Vagina (tissue), 2 donors: ENCODE measurements at regions of chrX and their contacts with region 1.

Region 1: GRCh38 chrX:6568031-6568430 is 33.1 kb upstream of the VCX3A start:
- DNase-seq: no peak
- H3K4me3 ChIP-seq: no peak overlapping the region
- H3K27ac ChIP-seq: no peak overlapping the region
- H3K4me1 ChIP-seq: no peaks in the 10 kb centered on the region
- H3K27me3 ChIP-seq: no peaks in the 10 kb centered on the region
- CTCF ChIP-seq: no peak
- POLR2A ChIP-seq: no peak

Region 2: GRCh38 chrX:6614506-6614905 is 46.5 kb after region 1 on chrX:
- intact Hi-C with region 1: no loop called
- DNase-seq: no peak
- H3K4me3 ChIP-seq: no peak overlapping the region
- H3K27ac ChIP-seq: no peak overlapping the region
- H3K4me1 ChIP-seq: no peaks in the 10 kb centered on the region
- H3K27me3 ChIP-seq: no peaks in the 10 kb centered on the region
- CTCF ChIP-seq: no peak
- POLR2A ChIP-seq: no peak

Region 3: GRCh38 chrX:8090482-8090881 is 1522.5 kb after region 1 on chrX:
- intact Hi-C with region 1: loop called (anchors 5 kb)
- DNase-seq: no peak
- H3K4me3 ChIP-seq: no peak overlapping the region
- H3K27ac ChIP-seq: no peak overlapping the region
- H3K4me1 ChIP-seq: no peaks in the 10 kb centered on the region
- H3K27me3 ChIP-seq: no peaks in the 10 kb centered on the region
- CTCF ChIP-seq: no peak
- POLR2A ChIP-seq: no peak

Region 4: GRCh38 chrX:8305350-8305749 is 1737.3 kb after region 1 on chrX:
- intact Hi-C with region 1: no loop called
- DNase-seq: no peak
- H3K4me3 ChIP-seq: no peak overlapping the region
- H3K27ac ChIP-seq: no peak overlapping the region
- H3K4me1 ChIP-seq: no peaks in the 10 kb centered on the region
- H3K27me3 ChIP-seq: no peaks in the 10 kb centered on the region
- CTCF ChIP-seq: no peak
- POLR2A ChIP-seq: no peak